ENCODE measurements at regions of chr12 and their contacts with region 1.

Region 1: DNA sequence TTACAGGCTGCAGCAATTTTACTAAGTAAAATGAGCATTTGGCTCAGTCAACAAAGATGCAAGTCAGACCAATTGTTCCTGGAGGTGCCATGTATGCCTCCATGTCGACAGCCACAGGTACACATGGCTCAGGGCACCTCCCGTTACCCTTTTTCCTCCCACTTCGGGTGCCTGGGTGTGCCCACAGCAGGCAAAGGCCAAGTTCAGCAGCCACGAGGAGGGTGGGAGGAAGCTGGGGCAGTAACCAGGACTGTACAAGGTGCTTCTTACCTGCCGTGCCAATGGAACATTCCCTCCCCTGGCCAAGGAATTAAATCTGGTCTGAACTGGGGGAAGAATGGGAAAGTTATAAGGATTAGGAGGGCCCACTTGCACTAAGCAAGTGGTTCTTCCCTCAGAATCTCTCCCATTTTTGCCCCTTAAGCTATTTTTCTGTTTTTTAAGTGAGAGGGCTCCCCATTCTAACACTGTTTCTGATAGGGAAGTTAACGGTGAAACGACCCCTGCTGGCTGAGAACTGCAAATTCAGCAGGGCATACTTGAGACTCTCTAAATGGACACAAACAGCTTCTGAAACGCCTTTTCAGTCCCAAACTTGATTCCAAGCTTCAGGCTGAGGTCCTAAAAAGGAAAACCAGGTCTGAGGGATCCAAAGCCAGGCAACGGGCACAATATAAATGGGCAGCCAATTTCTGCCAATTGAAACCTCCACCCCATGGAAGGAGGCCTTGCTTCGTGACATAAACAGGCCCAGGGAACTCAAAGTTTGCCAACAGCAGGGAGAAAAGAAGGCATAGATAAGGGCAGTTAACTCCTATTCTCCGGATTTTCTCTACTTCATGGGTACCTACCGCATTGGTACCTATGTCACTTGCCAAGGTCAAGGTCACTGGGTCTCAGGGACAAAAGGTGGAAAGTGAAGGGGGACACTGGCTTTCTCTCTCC is 24.8 kb downstream of the CLECL1 start:
- DNase-seq: no peak

Region 2: DNA sequence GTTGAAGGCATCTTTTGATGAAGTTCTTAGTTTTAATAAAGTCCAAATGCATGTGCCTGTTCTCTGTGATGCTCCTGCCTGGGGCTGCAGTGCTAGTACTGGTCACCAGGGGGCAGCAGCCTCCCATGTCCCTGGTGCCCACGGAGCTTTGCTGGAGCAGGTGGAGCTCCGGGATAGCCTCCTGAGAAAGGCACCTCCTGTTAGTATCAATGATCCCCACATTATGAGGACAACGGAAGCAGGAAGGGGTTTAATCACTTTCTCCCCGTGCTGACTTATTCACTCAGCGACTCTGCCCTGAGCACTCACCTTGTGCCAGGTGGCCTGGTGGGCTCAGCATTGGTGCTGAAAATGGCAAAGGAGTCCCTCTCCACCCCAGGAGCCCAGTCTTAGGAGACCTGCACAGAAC is 376.9 kb before region 1 on chr12:
- intact Hi-C with region 1: loop called (anchors 5 kb)
- DNase-seq: peak; percentile 81

Region 3: DNA sequence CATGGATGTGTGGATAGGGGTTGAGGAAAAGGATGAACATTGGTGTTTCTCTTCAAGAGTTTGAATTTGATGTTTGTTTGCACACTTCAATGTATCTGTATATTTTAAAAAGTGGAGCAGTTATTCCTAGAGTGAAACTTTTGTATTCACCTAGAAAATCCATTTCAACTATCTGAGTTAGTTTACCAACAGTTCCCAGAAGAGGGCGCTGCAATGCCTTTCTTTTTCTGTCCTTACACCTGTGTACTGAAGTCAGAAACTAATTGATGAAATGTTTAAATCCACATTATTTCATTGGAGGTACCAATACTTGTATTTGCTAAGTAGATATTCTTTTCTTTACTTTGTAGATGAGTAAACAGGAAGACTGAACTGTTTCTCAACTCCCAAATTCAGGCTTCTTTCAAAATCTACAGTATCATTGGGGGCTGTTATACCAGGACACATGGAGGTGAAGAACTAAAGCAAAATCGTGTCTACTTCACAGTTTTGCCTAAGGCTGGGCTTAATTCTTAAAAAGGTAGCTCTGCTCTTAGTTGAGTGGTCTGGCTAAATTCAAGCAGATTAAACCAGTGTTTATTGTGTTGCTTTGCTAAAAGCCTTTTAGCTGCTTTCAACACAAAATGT is 73.8 kb before region 1 on chr12:
- intact Hi-C with region 1: loop called (anchors 2 kb)
- DNase-seq: no peak

Region 4: GRCh38 chr12:9731797-9732196 is 23.7 kb after region 1 on chr12:
- intact Hi-C with region 1: no loop called
- DNase-seq: no peak

Region 5: DNA sequence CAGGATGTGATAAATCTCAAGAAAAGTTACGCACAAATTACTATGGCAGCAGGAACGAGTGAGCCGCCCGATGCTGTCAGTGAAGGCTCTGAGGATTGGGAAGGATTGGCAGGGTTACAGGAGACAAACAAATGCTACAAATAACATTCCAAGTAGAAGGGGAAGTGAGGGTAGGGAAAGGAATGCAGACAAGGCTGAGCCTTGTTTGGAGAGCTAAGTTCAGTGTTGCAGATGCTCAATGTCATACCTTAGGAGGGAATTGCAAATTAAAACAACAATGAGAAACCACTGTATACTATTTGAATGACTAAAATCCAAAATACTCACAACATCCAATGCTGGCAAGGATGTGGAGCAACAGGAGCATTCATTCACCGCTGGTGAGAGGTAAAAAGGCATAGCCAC is 323.6 kb after region 1 on chr12:
- intact Hi-C with region 1: no loop called
- DNase-seq: no peak

Measured in cardiac septum (tissue), 1 donor.